ENCODE measurements at regions of chr21 and their contacts with region 1.

Region 1: GRCh38 chr21:33451634-33452071 is 28.1 kb downstream of the TMEM50B start:
- DNase-seq: no peak
- H3K4me3 ChIP-seq: no peak overlapping the region
- H3K27ac ChIP-seq: no peak overlapping the region
- H3K4me1 ChIP-seq: no peaks in the 10 kb centered on the region
- H3K27me3 ChIP-seq: no peaks in the 10 kb centered on the region
- CTCF ChIP-seq: no peak

Region 2: GRCh38 chr21:32834916-32835235 is 616.8 kb before region 1 on chr21:
- CTCF ChIA-PET with region 1: no interaction called
- POLR2A ChIA-PET with region 1: no interaction called
- intact Hi-C with region 1: loop called (anchors 5 kb)
- DNase-seq: no peak
- H3K4me3 ChIP-seq: no peak overlapping the region
- H3K27ac ChIP-seq: no peak overlapping the region
- H3K4me1 ChIP-seq: no peaks in the 10 kb centered on the region
- H3K27me3 ChIP-seq: peaks cover 59% of the 10 kb centered on the region
- CTCF ChIP-seq: no peak

Region 3: GRCh38 chr21:32940079-32941014 is 511.3 kb before region 1 on chr21:
- CTCF ChIA-PET with region 1: no interaction called
- POLR2A ChIA-PET with region 1: no interaction called
- intact Hi-C with region 1: loop called (anchors 5 kb)
- DNase-seq: peak; percentile 68
- H3K4me3 ChIP-seq: no peak overlapping the region
- H3K27ac ChIP-seq: no peak overlapping the region
- H3K4me1 ChIP-seq: no peaks in the 10 kb centered on the region
- H3K27me3 ChIP-seq: peaks cover 23% of the 10 kb centered on the region
- CTCF ChIP-seq: peak; percentile 88